ENCODE measurements at regions of chr14 and their contacts with region 1.

Region 1: GRCh38 chr14:61860294-61860918 is 98.2 kb downstream of the SNAPC1 start:
- DNase-seq: peak; percentile 86
- ATAC-seq: peak; percentile 100
- H3K4me3 Mint-ChIP-seq: no peak overlapping the region
- H3K27ac Mint-ChIP-seq: no peak overlapping the region
- H3K4me1 Mint-ChIP-seq: peaks cover 5% of the 10 kb centered on the region
- H3K27me3 Mint-ChIP-seq: peaks cover 14% of the 10 kb centered on the region

Region 2: DNA sequence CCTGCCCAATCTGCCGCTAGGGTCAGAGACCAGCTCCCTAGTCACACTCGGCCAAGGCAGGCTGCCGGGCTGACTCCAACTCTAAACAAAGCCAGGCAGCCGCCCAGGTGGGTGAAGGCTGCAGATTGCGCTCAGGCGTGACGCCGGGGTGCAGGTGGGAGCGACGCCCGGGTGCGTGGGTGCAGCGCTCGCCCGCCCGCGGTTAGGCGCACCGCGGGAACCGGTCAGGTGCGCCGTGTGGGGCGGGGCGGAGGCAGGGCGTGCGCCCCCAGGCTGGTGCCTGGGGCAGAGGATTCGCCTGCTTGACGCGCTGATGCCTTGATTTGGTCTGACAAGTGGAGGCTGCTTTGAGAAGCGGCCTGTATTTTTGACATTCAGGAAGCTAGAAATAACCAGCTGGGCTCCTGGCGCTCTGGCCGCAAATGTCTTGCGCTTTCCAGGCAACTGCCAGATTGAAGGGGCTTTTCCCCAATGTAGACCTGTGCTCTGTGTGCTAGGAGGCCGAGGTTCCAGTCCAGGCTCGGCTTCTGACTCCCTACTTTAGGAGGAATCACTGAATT is 291.8 kb before region 1 on chr14:
- CTCF ChIA-PET with region 1: no interaction called
- POLR2A ChIA-PET with region 1: no interaction called
- intact Hi-C with region 1: no loop called
- DNase-seq: peak; percentile 77
- ATAC-seq: peak; percentile 50
- H3K4me3 Mint-ChIP-seq: peak overlapping the region; percentile 47
- H3K27ac Mint-ChIP-seq: peak overlapping the region; percentile 85
- H3K4me1 Mint-ChIP-seq: peaks cover 80% of the 10 kb centered on the region
- H3K27me3 Mint-ChIP-seq: peaks cover 3% of the 10 kb centered on the region

Region 3: GRCh38 chr14:61628016-61628725 is 232.2 kb before region 1 on chr14:
- CTCF ChIA-PET with region 1: no interaction called
- POLR2A ChIA-PET with region 1: no interaction called
- intact Hi-C with region 1: no loop called
- DNase-seq: no peak
- ATAC-seq: no peak
- H3K4me3 Mint-ChIP-seq: no peak overlapping the region
- H3K27ac Mint-ChIP-seq: no peak overlapping the region
- H3K4me1 Mint-ChIP-seq: peaks cover 33% of the 10 kb centered on the region
- H3K27me3 Mint-ChIP-seq: no peaks in the 10 kb centered on the region

Region 4: GRCh38 chr14:61750708-61751474 is 109.5 kb before region 1 on chr14:
- CTCF ChIA-PET with region 1: no interaction called
- POLR2A ChIA-PET with region 1: no interaction called
- intact Hi-C with region 1: no loop called
- DNase-seq: peak; percentile 93
- ATAC-seq: peak; percentile 92
- H3K4me3 Mint-ChIP-seq: peak overlapping the region; percentile 97
- H3K27ac Mint-ChIP-seq: peak overlapping the region; percentile 89
- H3K4me1 Mint-ChIP-seq: peaks cover 22% of the 10 kb centered on the region
- H3K27me3 Mint-ChIP-seq: peaks cover 2% of the 10 kb centered on the region

Region 5: GRCh38 chr14:61894452-61895077 is 34.2 kb after region 1 on chr14:
- CTCF ChIA-PET with region 1: interaction called, 10 read pairs
- POLR2A ChIA-PET with region 1: no interaction called
- intact Hi-C with region 1: no loop called
- DNase-seq: peak; percentile 83
- ATAC-seq: no peak
- H3K4me3 Mint-ChIP-seq: no peak overlapping the region
- H3K27ac Mint-ChIP-seq: no peak overlapping the region
- H3K4me1 Mint-ChIP-seq: peaks cover 14% of the 10 kb centered on the region
- H3K27me3 Mint-ChIP-seq: peaks cover 2% of the 10 kb centered on the region

Region 6: GRCh38 chr14:62778847-62779246 is 918.4 kb after region 1 on chr14:
- CTCF ChIA-PET with region 1: no interaction called
- POLR2A ChIA-PET with region 1: no interaction called
- intact Hi-C with region 1: no loop called
- DNase-seq: no peak
- ATAC-seq: no peak
- H3K4me3 Mint-ChIP-seq: no peak overlapping the region
- H3K27ac Mint-ChIP-seq: no peak overlapping the region
- H3K4me1 Mint-ChIP-seq: no peaks in the 10 kb centered on the region
- H3K27me3 Mint-ChIP-seq: no peaks in the 10 kb centered on the region